Posterior cingulate gyrus (tissue), 11 donors: ENCODE measurements at regions of chrX and their contacts with region 1.

Region 1: GRCh38 chrX:133792198-133792953 is 193.0 kb downstream of the GPC3 start:
- DNase-seq: peak; percentile 32 to 93 (median 66)

Region 2: DNA sequence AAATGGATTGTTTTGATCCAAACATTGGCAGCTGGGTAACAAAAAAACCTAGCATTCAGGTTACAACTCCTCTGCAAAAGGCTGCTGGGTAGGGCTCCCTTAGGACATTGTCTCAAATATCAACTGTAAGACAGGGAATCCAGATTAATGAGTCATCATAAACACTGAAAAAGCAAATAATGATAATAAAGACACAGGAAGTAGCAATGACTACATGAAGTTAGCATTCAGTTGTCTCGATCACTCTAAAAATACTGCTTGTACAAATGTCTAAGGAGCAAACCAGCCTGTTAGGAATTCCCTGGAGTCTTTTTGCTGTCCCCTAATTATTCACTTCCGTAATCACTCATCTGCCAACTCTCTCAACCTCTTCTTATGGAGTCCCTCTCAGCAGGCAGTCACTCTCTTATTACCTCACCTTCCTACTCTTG is 66.2 kb before region 1 on chrX:
- intact Hi-C with region 1: no loop called
- DNase-seq: no peak

Region 3: GRCh38 chrX:133837091-133837490 is 44.7 kb after region 1 on chrX:
- intact Hi-C with region 1: loop called (anchors 2 kb)
- DNase-seq: no peak

Region 4: GRCh38 chrX:134026565-134027311 is 234.4 kb after region 1 on chrX:
- intact Hi-C with region 1: loop called (anchors 2 kb)
- DNase-seq: peak in 4 of 10 donors; percentile 2 to 17 (median 8)

Region 5: GRCh38 chrX:134074151-134074550 is 281.8 kb after region 1 on chrX:
- intact Hi-C with region 1: no loop called
- DNase-seq: no peak

Region 6: GRCh38 chrX:134396174-134396573 is 603.8 kb after region 1 on chrX:
- intact Hi-C with region 1: loop called (anchors 2 kb)
- DNase-seq: no peak